A549 (cell line): ENCODE measurements at regions of chr7 and their contacts with region 1.

Region 1: GRCh38 chr7:116525913-116526861 is 1.4 kb downstream of the CAV1 start:
- DNase-seq: peak; percentile 83 to 90
- ATAC-seq: peak; percentile 72 to 82
- H3K4me3 ChIP-seq: peak overlapping the region; percentile 78
- H3K27ac ChIP-seq: peak overlapping the region; percentile 99
- H3K4me1 ChIP-seq: peaks cover 68% of the 10 kb centered on the region
- CTCF ChIP-seq: peak; percentile 86
- EP300 ChIP-seq: no peak
- POLR2A ChIP-seq: peak; percentile 30; the same call in 1 of the 2 replicates
- RAD21 ChIP-seq: peak; percentile 67 to 94

Region 2: GRCh38 chr7:116258734-116259133 is 267.5 kb before region 1 on chr7:
- CTCF ChIA-PET with region 1: interaction called, 108 read pairs
- POLR2A ChIA-PET with region 1: interaction called, 31 read pairs
- DNase-seq: peak; percentile 36 to 80
- ATAC-seq: peak in 1 of 2 experiments; percentile 39; a peak in 3 of 6 replicates
- H3K4me3 ChIP-seq: no peak overlapping the region
- H3K27ac ChIP-seq: peak overlapping the region; percentile 73 to 88
- H3K4me1 ChIP-seq: peaks cover 32% of the 10 kb centered on the region
- CTCF ChIP-seq: peak; percentile 94
- EP300 ChIP-seq: no peak
- POLR2A ChIP-seq: no peak
- RAD21 ChIP-seq: peak; percentile 99

Region 3: GRCh38 chr7:116315293-116315692 is 210.9 kb before region 1 on chr7:
- CTCF ChIA-PET with region 1: interaction called, 12 read pairs
- POLR2A ChIA-PET with region 1: no interaction called
- DNase-seq: peak; percentile 23 to 55
- ATAC-seq: peak; percentile 11 to 34; a peak in 3 of 6 replicates
- H3K4me3 ChIP-seq: no peak overlapping the region
- H3K27ac ChIP-seq: peak overlapping the region; percentile 86 to 88
- H3K4me1 ChIP-seq: peaks cover 34% of the 10 kb centered on the region
- CTCF ChIP-seq: no peak
- EP300 ChIP-seq: no peak
- POLR2A ChIP-seq: no peak
- RAD21 ChIP-seq: no peak

Region 4: DNA sequence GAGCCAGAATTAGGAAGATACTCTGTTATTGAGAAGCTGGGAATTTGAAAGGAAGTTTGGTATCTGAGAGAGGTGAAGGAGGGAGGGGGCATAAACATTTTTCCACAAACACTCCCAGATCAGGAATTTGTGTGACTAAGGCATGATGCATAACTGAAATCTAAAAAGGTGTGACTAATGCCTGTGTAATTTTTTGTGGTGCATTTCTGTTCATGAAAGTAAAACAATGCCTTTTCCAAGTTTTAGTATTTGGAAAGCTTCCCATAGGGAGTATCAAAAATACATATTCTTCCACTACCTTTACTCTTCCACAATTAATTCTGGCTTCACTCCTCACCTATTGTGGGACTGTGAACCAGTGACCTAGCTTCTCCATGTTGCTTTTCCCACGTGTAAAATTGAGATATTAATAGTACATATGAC is 83.1 kb before region 1 on chr7:
- CTCF ChIA-PET with region 1: interaction called, 31 read pairs
- POLR2A ChIA-PET with region 1: interaction called, 15 read pairs
- DNase-seq: peak; percentile 84 to 93
- ATAC-seq: peak; percentile 85 to 88
- H3K4me3 ChIP-seq: no peak overlapping the region
- H3K27ac ChIP-seq: peak overlapping the region; percentile 81 to 93
- H3K4me1 ChIP-seq: peaks cover 69% of the 10 kb centered on the region
- CTCF ChIP-seq: no peak
- EP300 ChIP-seq: peak; percentile 81 to 86; a peak in 4 of 5 replicates
- POLR2A ChIP-seq: no peak
- RAD21 ChIP-seq: peak; percentile 41 to 63; a peak in 3 of 5 replicates

Region 5: DNA sequence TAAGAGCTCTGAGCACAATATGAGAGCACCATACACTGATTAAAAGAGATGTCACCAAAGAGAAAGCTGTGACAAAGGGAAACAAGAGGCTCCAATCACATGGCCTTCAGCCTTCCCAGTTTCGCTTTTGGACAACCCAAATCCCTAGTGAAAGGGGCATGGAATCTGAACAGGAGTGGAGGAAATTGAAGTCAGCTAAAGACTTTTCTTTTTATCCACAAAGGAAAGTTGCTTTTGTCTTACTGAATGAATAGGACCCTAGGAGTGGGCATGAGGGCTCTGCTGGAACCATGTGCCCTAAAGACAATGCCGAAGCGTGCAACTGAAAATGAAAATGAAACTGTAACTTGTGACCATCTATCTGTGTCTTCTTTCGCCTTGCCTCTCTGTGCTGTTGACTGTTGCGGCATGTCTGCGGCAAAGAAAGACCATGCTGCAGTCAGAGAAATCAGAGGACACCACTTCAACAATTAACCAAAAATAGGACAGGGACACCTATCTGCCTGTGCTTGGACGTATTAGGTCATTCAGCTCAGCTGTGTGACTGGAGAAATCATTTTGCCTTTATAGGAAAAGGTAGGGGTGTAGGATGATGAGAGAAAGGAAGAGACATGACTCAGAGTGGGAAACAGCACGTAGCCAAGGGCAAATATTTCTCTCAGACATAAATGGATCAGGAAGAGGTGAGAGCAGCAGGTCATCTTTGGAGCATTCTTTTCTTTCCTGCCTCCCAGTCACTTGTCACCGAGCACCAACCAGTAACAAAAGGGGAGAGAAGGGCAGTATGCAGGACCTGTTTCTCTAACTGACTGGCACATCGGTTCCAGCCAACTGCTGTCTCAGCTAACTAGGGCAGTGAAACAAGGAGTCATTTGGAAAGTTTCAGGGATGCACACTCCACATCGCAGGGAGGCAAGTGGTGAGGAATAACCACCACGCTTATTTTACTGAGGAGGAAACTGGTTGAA is 14.4 kb before region 1 on chr7:
- CTCF ChIA-PET with region 1: interaction called, 28 read pairs
- POLR2A ChIA-PET with region 1: interaction called, 14 read pairs
- DNase-seq: peak; percentile 33 to 82
- ATAC-seq: peak; percentile 83
- H3K4me3 ChIP-seq: peak overlapping the region; percentile 39
- H3K27ac ChIP-seq: peak overlapping the region; percentile 89 to 90
- H3K4me1 ChIP-seq: peaks cover 43% of the 10 kb centered on the region
- CTCF ChIP-seq: no peak
- EP300 ChIP-seq: no peak
- POLR2A ChIP-seq: no peak
- RAD21 ChIP-seq: peak; percentile 2 to 27; a peak in 2 of 5 replicates

Region 6: DNA sequence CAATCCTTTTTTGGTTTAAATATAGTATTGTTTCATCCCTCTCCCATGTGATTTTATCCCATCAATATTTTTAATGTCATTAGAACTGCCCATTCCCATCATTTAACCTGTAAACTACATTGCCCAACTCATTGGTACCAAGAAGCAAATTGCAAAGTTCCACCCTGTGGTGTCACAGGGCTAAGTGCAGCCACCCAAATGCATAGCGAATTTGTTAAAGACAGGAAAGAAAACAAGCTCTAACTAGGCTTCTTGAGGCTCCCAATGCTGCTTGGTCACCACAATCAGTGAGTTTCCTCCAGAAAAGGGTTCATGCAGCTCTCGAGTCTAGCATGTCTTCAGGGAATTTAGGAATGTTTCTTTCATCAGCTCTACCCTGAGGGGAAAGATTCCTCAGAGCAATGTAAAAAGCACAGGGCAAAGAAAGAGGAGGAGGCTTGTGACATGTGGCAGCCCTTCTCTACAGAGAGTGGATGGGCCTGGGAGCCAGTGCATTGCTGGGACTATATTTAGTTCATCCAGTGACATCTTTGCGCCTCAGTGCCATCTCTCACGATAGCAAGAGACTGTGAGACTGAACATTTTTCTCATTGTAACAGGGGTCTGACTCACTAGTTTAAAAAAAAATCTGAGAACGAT is 56.7 kb after region 1 on chr7:
- CTCF ChIA-PET with region 1: interaction called, 37 read pairs
- POLR2A ChIA-PET with region 1: interaction called, 15 read pairs
- DNase-seq: peak in 1 of 2 experiments; percentile 30
- ATAC-seq: peak; percentile 72 to 78
- H3K4me3 ChIP-seq: no peak overlapping the region
- H3K27ac ChIP-seq: peak overlapping the region; percentile 68 to 79
- H3K4me1 ChIP-seq: peaks cover 24% of the 10 kb centered on the region
- CTCF ChIP-seq: no peak
- EP300 ChIP-seq: no peak
- POLR2A ChIP-seq: no peak
- RAD21 ChIP-seq: no peak

Region 7: DNA sequence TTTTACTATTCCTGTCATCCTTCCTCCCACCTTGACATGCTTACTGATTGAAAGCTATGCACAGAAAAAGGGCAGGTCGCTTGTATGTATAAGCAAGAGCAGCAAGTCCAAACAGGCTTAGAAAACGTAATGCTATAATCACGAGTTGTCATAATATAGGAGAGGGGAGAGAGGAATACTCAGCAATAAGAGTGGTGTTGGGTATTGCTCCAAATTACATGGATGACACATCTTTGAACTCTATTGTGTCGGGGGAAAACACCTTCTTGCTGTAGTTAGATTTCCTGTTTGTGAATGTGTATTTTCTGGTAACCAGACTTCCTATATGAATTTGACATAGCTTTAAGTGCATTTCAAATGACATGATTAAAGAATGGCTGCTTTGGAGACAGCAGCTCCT is 153.3 kb after region 1 on chr7:
- CTCF ChIA-PET with region 1: no interaction called
- POLR2A ChIA-PET with region 1: no interaction called
- DNase-seq: no peak
- ATAC-seq: no peak
- H3K4me3 ChIP-seq: no peak overlapping the region
- H3K27ac ChIP-seq: no peak overlapping the region
- H3K4me1 ChIP-seq: peaks cover 57% of the 10 kb centered on the region
- CTCF ChIP-seq: no peak
- EP300 ChIP-seq: no peak
- POLR2A ChIP-seq: no peak
- RAD21 ChIP-seq: no peak